ENCODE measurements at regions of chr18 and their contacts with region 1.

Region 1: GRCh38 chr18:47748847-47749599 is 181.4 kb downstream of the SMAD2 start:
- DNase-seq: peak; percentile 50 to 58
- ATAC-seq: peak; percentile 91 to 92
- H3K4me3 ChIP-seq: no peak overlapping the region; the same call in 2 of the 3 replicates
- H3K27ac ChIP-seq: peak overlapping the region in 1 of 2 experiments; percentile 49; a peak in 1 of 6 replicates
- H3K4me1 ChIP-seq: no peaks in the 10 kb centered on the region
- CTCF ChIP-seq: peak; percentile 99
- EP300 ChIP-seq: no peak
- POLR2A ChIP-seq: no peak
- RAD21 ChIP-seq: peak; percentile 75 to 95

Region 2: DNA sequence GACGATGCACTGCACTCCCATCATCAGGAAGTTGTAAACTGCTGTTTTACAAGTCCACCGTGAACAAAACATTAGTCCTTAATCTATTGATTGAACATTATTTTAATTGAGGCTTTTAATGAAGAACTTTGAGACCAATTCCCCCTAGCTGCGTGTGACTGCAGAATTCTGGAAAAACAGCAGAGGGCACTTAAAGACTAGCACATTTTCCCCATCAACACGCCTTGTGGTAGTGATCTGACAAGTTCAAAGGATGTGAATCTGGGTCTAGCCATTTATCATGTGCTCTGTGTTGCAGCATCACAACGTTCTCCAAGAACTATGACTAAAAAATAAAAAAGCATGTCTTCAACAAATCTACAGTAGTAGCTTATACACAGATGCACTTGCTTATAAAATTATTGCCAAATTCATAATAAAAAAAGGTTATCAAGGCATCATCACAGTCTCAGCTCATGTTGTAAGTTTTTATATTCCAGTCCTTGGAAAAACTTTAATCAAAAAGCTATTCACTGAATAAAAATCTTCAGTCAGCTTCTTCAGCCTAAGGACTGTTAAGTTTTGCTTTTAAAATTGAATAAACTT is 533.4 kb before region 1 on chr18:
- CTCF ChIA-PET with region 1: interaction called, 40 read pairs
- POLR2A ChIA-PET with region 1: no interaction called
- DNase-seq: peak; percentile 11 to 64
- ATAC-seq: peak; percentile 74 to 80; a peak in 4 of 6 replicates
- H3K4me3 ChIP-seq: no peak overlapping the region
- H3K27ac ChIP-seq: no peak overlapping the region
- H3K4me1 ChIP-seq: no peaks in the 10 kb centered on the region
- CTCF ChIP-seq: peak; percentile 53
- EP300 ChIP-seq: no peak
- POLR2A ChIP-seq: no peak
- RAD21 ChIP-seq: peak; percentile 70 to 75

Region 3: GRCh38 chr18:47485221-47485797 is 263.7 kb before region 1 on chr18:
- CTCF ChIA-PET with region 1: no interaction called
- POLR2A ChIA-PET with region 1: no interaction called
- DNase-seq: no peak
- ATAC-seq: no peak
- H3K4me3 ChIP-seq: no peak overlapping the region
- H3K27ac ChIP-seq: no peak overlapping the region
- H3K4me1 ChIP-seq: no peaks in the 10 kb centered on the region
- CTCF ChIP-seq: no peak
- EP300 ChIP-seq: no peak
- POLR2A ChIP-seq: no peak
- RAD21 ChIP-seq: no peak

Region 4: GRCh38 chr18:47737956-47738355 is 11.1 kb before region 1 on chr18:
- CTCF ChIA-PET with region 1: interaction called, 21 read pairs
- POLR2A ChIA-PET with region 1: no interaction called
- DNase-seq: no peak
- ATAC-seq: no peak
- H3K4me3 ChIP-seq: no peak overlapping the region
- H3K27ac ChIP-seq: no peak overlapping the region
- H3K4me1 ChIP-seq: no peaks in the 10 kb centered on the region
- CTCF ChIP-seq: no peak
- EP300 ChIP-seq: no peak
- POLR2A ChIP-seq: no peak
- RAD21 ChIP-seq: no peak